Esophagus muscularis mucosa (tissue), 4 donors: ENCODE measurements at regions of chr6 and their contacts with region 1.

Region 1: GRCh38 chr6:123415844-123416468 is 220.8 kb downstream of the TRDN start:
- DNase-seq: no peak
- H3K4me3 ChIP-seq: no peak overlapping the region
- H3K27ac ChIP-seq: no peak overlapping the region
- H3K4me1 ChIP-seq: no peaks in the 10 kb centered on the region
- H3K27me3 ChIP-seq: no peaks in the 10 kb centered on the region
- CTCF ChIP-seq: peak; percentile 37 to 70 (median 65)
- EP300 ChIP-seq: no peak
- POLR2A ChIP-seq: no peak

Region 2: GRCh38 chr6:123715006-123715875 is 299.3 kb after region 1 on chr6:
- intact Hi-C with region 1: loop called (anchors 10 kb)
- DNase-seq: no peak
- H3K4me3 ChIP-seq: no peak overlapping the region
- H3K27ac ChIP-seq: no peak overlapping the region
- H3K4me1 ChIP-seq: no peaks in the 10 kb centered on the region
- H3K27me3 ChIP-seq: no peaks in the 10 kb centered on the region
- CTCF ChIP-seq: peak; percentile 19 to 40 (median 31)
- EP300 ChIP-seq: no peak
- POLR2A ChIP-seq: no peak